ENCODE measurements at regions of chr20 and their contacts with region 1.

Region 1: GRCh38 chr20:44196271-44196670 is 9.3 kb upstream of the JPH2 start:
- DNase-seq: no peak

Region 2: GRCh38 chr20:44129911-44130718 is 66.2 kb before region 1 on chr20:
- in situ Hi-C with region 1: loop called (anchors 10 kb)
- DNase-seq: no peak

Region 3: GRCh38 chr20:44302026-44302669 is 105.9 kb after region 1 on chr20:
- in situ Hi-C with region 1: no loop called
- DNase-seq: no peak

Region 4: GRCh38 chr20:44829688-44830087 is 633.4 kb after region 1 on chr20:
- in situ Hi-C with region 1: no loop called
- DNase-seq: no peak